ENCODE measurements at regions of chr15 and their contacts with region 1.

Region 1: DNA sequence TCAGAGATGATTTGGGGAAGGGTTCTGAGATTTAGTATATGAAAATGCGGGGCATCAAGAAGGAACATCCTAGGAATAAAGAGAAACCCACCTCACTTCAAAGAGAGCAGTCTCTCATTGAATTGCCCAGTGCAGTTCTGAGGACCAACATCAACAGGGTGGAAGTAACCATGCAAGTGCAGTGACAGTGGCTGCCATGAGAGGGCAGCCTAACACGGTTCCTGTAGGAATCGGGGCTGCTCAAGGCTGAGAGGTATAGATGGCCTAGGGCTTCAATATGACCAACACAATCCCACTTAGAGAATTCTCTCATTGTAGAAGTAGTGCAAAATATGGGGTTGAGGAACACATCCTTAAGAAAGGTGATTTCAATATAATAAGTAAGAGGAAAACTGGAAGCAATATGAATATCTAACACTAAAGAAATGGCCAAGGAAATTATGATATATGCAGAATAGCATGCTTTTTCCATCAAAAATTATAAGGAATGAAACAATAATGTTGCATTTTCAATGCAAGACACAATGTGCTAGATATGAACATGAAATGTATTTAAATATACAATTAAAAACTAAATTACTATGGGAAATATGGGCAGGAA is 51.1 kb upstream of the ARRDC4 start:
- DNase-seq: peak; percentile 25 to 39
- ATAC-seq: peak; percentile 80 to 90
- H3K4me3 ChIP-seq: no peak overlapping the region
- H3K27ac ChIP-seq: no peak overlapping the region
- H3K4me1 ChIP-seq: peaks cover 0 to under 1% of the 10 kb centered on the region in 2 donors
- H3K27me3 ChIP-seq: peaks cover 9 to 22% (median 19%) of the 10 kb centered on the region in 3 donors
- CTCF ChIP-seq: peak; percentile 66 to 89 (median 83)
- POLR2A ChIP-seq: no peak

Region 2: GRCh38 chr15:98085003-98085639 is 175.7 kb after region 1 on chr15:
- in situ Hi-C with region 1: loop called (anchors 5 to 10 kb)
- intact Hi-C with region 1: loop called (anchors 1 kb)
- DNase-seq: peak in 1 of 2 donors; percentile 19
- ATAC-seq: no peak
- H3K4me3 ChIP-seq: no peak overlapping the region
- H3K27ac ChIP-seq: no peak overlapping the region
- H3K4me1 ChIP-seq: no peaks in the 10 kb centered on the region
- H3K27me3 ChIP-seq: no peaks in the 10 kb centered on the region
- CTCF ChIP-seq: peak; percentile 49 to 68 (median 58)
- POLR2A ChIP-seq: no peak

Region 3: DNA sequence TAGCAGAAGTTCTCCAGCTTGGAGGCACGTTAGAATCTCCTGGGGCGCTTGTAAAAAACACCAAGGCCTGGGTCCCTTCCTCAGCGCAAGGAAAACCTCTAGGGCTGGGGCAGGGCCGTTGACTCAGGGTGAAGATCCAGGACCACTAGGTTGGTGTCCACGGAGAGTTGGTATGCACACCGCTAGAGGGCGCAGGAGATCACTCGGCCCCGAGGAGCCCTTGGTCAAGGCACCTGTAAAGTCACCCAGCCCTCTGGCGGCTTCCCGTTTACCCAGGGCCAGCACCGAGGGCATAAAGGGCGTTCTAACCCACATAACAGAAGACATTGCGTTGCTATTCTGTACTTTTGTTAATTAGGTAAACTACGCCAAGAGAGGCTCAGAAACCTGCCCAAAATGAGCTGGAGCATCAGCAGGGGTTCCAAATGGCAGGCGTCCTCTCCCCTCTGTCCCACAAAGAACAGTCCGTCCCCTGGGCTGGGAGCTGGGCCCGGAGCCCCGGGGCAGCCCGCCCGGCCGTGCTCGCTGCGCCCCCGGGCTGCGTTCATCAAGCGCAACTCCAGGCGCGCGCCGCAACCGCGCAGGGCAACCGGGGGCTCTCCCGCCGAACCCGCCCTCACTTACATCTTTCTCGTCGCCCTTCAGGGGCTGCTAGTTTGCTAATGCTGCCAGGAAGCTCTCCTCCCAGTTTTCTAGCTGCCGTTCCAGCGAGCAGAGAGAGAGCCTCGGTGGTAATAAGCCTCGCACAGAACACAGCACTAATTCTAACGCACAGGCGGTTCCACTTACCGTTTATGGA is 383.2 kb after region 1 on chr15:
- in situ Hi-C with region 1: loop called in 3 of 4 experiments (anchors 25 kb)
- intact Hi-C with region 1: no loop called
- DNase-seq: no peak
- ATAC-seq: no peak
- H3K4me3 ChIP-seq: no peak overlapping the region
- H3K27ac ChIP-seq: no peak overlapping the region
- H3K4me1 ChIP-seq: no peaks in the 10 kb centered on the region
- H3K27me3 ChIP-seq: peaks cover 15 to 34% (median 22%) of the 10 kb centered on the region in 3 donors
- CTCF ChIP-seq: peak in 3 of 5 experiments; percentile 12 to 51 (median 22)
- POLR2A ChIP-seq: no peak

Region 4: DNA sequence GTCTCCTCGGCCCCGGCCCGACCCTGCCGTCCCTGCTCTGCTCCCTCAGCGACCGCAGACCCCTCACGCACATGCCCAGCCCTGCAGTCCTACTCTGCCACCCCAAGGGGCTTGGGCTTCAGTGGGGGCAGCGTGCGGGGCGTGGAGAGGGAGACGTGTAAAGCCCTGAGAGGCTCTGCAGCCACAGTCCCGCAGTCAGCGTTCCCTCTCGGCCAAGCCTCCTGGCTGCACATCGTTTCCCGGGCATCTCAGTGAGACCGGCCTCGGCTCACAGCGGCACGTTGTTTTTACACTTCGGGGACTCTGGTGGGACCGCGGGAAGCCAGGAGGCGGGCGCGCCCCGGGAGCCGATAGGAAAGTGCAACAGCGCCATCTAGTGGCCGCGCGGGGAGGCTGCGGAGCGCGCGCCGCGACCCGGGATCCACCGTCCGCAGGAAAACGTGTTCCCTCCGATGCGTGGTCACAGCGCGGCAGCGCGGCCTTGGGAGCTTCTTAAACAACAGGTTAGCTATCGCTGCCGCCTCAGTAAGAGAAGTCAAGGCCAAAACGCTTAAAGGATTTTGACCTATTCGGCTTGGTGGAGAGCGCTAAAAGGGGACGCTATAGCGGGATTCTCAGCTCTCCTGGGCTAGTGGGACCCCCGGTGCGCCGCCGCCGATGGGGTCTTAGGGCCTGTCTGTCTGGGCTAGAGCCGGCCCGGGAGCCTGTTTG is 512.2 kb after region 1 on chr15:
- in situ Hi-C with region 1: loop called in 3 of 4 experiments (anchors 10 to 25 kb)
- intact Hi-C with region 1: loop called (anchors 5 kb)
- DNase-seq: peak; percentile 18 to 26
- ATAC-seq: peak; percentile 51 to 67
- H3K4me3 ChIP-seq: peak overlapping the region in 3 of 4 donors; percentile 17 to 34 (median 31)
- H3K27ac ChIP-seq: no peak overlapping the region
- H3K4me1 ChIP-seq: peaks cover 7 to 9% of the 10 kb centered on the region in 2 donors
- H3K27me3 ChIP-seq: peaks cover 17 to 21% (median 18%) of the 10 kb centered on the region in 3 donors
- CTCF ChIP-seq: peak; percentile 89 to 100 (median 95)
- POLR2A ChIP-seq: no peak

Measured in gastrocnemius medialis (tissue), 4 donors.